Cardiac septum (tissue), 1 donor: ENCODE measurements at regions of chr22 and their contacts with region 1.

Region 1: GRCh38 chr22:31802575-31802974 is 48.8 kb downstream of the DEPDC5 start:
- DNase-seq: no peak

Region 2: GRCh38 chr22:31861226-31861840 is 58.8 kb after region 1 on chr22:
- intact Hi-C with region 1: loop called (anchors 10 kb)
- DNase-seq: no peak